ENCODE measurements at regions of chr14 and their contacts with region 1.

Region 1: GRCh38 chr14:30005114-30005808 is 77.6 kb upstream of the PRKD1 start:
- DNase-seq: peak; percentile 3 to 24 (median 8)
- ATAC-seq: peak; percentile 62; the same call in 2 of the 3 replicates
- H3K4me3 ChIP-seq: no peak overlapping the region
- H3K27ac ChIP-seq: no peak overlapping the region
- H3K4me1 ChIP-seq: no peaks in the 10 kb centered on the region
- H3K27me3 ChIP-seq: no peaks in the 10 kb centered on the region
- CTCF ChIP-seq: peak; percentile 15 to 51 (median 31); a peak in 3 of 6 replicates
- EP300 ChIP-seq: no peak
- POLR2A ChIP-seq: no peak
- RAD21 ChIP-seq: peak; percentile 69 to 73

Region 2: GRCh38 chr14:29521526-29522137 is 483.6 kb before region 1 on chr14:
- CTCF ChIA-PET with region 1: no interaction called
- POLR2A ChIA-PET with region 1: no interaction called
- in situ Hi-C with region 1: no loop called
- intact Hi-C with region 1: no loop called
- DNase-seq: peak in 1 of 4 experiments; percentile 15
- ATAC-seq: no peak
- H3K4me3 ChIP-seq: no peak overlapping the region
- H3K27ac ChIP-seq: no peak overlapping the region
- H3K4me1 ChIP-seq: no peaks in the 10 kb centered on the region
- H3K27me3 ChIP-seq: no peaks in the 10 kb centered on the region
- CTCF ChIP-seq: peak; percentile 13 to 29 (median 28); a peak in 2 of 6 replicates
- EP300 ChIP-seq: no peak
- POLR2A ChIP-seq: no peak
- RAD21 ChIP-seq: peak in 1 of 2 experiments; percentile 32; a peak in 2 of 4 replicates

Region 3: DNA sequence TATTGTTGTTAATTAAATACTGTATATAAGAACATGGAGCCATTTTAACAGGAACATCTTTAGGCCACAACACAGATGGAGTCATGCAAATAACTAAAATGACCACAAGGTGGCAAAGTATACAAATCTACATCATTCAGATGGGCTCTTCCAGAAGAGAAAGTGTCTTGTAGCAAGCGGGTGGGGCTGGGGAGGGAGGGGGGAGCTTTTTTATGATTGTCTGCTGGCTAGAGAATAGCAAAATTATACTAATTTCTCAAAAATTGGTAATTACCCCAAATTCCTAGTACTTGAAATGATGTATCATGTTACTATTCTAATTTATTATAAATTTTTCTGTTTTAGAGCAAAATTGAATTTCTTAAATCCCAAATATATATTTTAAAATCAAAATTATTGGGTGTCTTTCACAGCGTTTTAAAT is 456.3 kb before region 1 on chr14:
- CTCF ChIA-PET with region 1: interaction called, 3 read pairs
- POLR2A ChIA-PET with region 1: no interaction called
- in situ Hi-C with region 1: loop called (anchors 25 kb)
- intact Hi-C with region 1: loop called (anchors 2 kb)
- DNase-seq: peak; percentile 50 to 59 (median 59)
- ATAC-seq: peak; percentile 95
- H3K4me3 ChIP-seq: no peak overlapping the region
- H3K27ac ChIP-seq: no peak overlapping the region
- H3K4me1 ChIP-seq: no peaks in the 10 kb centered on the region
- H3K27me3 ChIP-seq: no peaks in the 10 kb centered on the region
- CTCF ChIP-seq: peak; percentile 41 to 51 (median 44); a peak in 4 of 6 replicates
- EP300 ChIP-seq: no peak
- POLR2A ChIP-seq: no peak
- RAD21 ChIP-seq: peak; percentile 50 to 63

Region 4: GRCh38 chr14:29558516-29558915 is 446.7 kb before region 1 on chr14:
- CTCF ChIA-PET with region 1: no interaction called
- POLR2A ChIA-PET with region 1: no interaction called
- in situ Hi-C with region 1: loop called (anchors 25 kb)
- intact Hi-C with region 1: no loop called
- DNase-seq: no peak
- ATAC-seq: no peak
- H3K4me3 ChIP-seq: no peak overlapping the region
- H3K27ac ChIP-seq: no peak overlapping the region
- H3K4me1 ChIP-seq: peaks cover 0 to 4% of the 10 kb centered on the region in 2 experiments; a peak in 1 of 5 replicates
- H3K27me3 ChIP-seq: no peaks in the 10 kb centered on the region
- CTCF ChIP-seq: no peak
- EP300 ChIP-seq: no peak
- POLR2A ChIP-seq: no peak
- RAD21 ChIP-seq: no peak

Region 5: DNA sequence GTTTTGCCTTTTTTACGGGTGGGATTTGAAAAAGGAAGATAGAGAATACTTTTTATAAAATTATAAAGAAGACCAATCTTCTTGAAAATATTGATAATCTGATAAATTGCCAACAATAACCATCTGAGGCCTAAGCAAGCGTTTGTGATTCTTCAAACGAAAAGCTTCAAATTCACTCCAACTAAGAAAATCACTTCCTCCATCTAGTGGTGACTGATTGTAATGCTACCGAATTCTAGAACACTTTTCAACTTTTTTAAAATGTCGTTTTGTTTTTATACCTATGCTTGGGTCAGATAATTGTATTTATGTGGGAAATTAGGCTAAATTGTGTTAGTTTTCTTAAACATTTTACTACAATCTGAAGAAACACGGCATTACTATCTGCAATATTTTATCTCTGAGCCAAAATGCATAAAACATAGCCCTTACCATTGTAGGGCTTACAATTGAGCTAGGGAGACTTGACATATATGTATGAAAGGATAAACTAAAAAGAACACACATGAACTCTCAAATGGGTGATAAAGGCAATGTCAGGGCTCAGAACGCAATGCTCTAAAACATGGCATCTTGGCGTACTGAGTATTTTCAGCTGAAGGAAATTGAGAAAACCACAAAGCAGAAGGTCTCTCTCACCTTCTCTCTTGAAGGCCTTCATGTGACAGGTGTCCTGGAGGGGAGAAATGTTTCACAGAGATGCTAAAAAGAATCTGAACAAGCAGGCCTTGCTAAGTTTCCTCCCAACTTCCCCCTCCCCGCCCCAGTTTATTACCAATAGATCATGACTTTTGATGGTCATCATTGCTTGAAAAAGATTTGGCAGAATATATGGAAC is 516.9 kb after region 1 on chr14:
- CTCF ChIA-PET with region 1: no interaction called
- POLR2A ChIA-PET with region 1: no interaction called
- in situ Hi-C with region 1: no loop called
- intact Hi-C with region 1: loop called (anchors 10 kb)
- DNase-seq: peak; percentile 20 to 49 (median 26)
- ATAC-seq: 0 out of 3 replicates have a peak, but pooled peaks have one; percentile 41
- H3K4me3 ChIP-seq: no peak overlapping the region
- H3K27ac ChIP-seq: no peak overlapping the region
- H3K4me1 ChIP-seq: no peaks in the 10 kb centered on the region
- H3K27me3 ChIP-seq: no peaks in the 10 kb centered on the region
- CTCF ChIP-seq: peak; percentile 26 to 76 (median 36); a peak in 4 of 6 replicates
- EP300 ChIP-seq: no peak
- POLR2A ChIP-seq: no peak
- RAD21 ChIP-seq: peak; percentile 65 to 77